ENCODE measurements at regions of chr5 and their contacts with region 1.

Region 1: GRCh38 chr5:179166886-179167841 is 107.0 kb downstream of the ZNF354C start:
- DNase-seq: peak; percentile 50
- H3K4me3 ChIP-seq: no peak overlapping the region
- H3K27ac ChIP-seq: no peak overlapping the region
- H3K4me1 ChIP-seq: no peaks in the 10 kb centered on the region
- CTCF ChIP-seq: peak; percentile 94

Region 2: GRCh38 chr5:179154991-179155955 is 11.9 kb before region 1 on chr5:
- CTCF ChIA-PET with region 1: no interaction called
- POLR2A ChIA-PET with region 1: no interaction called
- intact Hi-C with region 1: no loop called
- DNase-seq: peak; percentile 11
- H3K4me3 ChIP-seq: no peak overlapping the region
- H3K27ac ChIP-seq: no peak overlapping the region
- H3K4me1 ChIP-seq: no peaks in the 10 kb centered on the region
- CTCF ChIP-seq: no peak

Region 3: DNA sequence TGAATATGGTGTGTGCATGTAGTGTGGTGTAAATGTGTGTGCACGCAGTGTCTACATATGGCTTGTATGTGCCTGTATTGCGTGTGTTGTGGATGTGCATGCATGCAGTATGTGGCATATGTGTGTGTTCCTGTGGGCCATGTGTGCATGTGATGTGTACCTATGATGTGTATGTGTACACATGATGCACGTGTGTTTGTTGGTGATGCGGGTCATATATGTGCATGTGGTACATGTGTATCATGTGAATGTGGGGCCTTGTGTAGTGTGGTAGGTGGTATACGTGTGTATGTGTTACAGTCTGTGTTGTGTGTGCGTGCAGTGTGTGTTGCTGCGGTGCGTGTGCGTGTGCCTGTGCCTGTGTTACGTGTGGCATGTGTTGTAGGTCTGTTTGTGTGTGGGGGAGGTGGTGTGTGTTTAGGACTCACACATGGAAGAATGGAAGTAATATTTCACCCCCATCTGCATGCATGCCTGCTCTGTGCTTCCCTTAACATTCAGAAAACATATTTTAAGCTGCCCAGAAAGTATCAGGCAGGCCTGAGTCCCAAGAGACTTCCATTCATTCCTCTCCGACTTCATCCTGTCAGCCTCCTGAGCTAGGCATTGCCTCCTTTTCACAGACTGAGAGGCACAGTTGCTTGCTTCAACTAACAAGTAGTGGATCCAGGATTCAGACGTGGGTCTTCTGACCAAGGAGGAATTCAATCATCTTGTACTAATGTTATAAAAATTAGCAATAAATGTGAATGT is 327.8 kb after region 1 on chr5:
- CTCF ChIA-PET with region 1: no interaction called
- POLR2A ChIA-PET with region 1: no interaction called
- intact Hi-C with region 1: loop called (anchors 1 kb)
- DNase-seq: no peak
- H3K4me3 ChIP-seq: no peak overlapping the region
- H3K27ac ChIP-seq: no peak overlapping the region
- H3K4me1 ChIP-seq: no peaks in the 10 kb centered on the region
- CTCF ChIP-seq: no peak

Measured in OCI-LY7 (cell line).